HepG2 (cell line): ENCODE measurements at regions of chr16 and their contacts with region 1.

Region 1: GRCh38 chr16:4081521-4082021 is 34.7 kb downstream of the ADCY9 start:
- DNase-seq: no peak
- ATAC-seq: no peak
- H3K4me3 ChIP-seq: no peak overlapping the region
- H3K27ac ChIP-seq: no peak overlapping the region
- H3K4me1 ChIP-seq: peaks cover 9% of the 10 kb centered on the region; the same call in 1 of the 2 replicates
- H3K27me3 ChIP-seq: no peaks in the 10 kb centered on the region
- CTCF ChIP-seq: no peak
- EP300 ChIP-seq: no peak
- POLR2A ChIP-seq: no peak
- RAD21 ChIP-seq: no peak

Region 2: DNA sequence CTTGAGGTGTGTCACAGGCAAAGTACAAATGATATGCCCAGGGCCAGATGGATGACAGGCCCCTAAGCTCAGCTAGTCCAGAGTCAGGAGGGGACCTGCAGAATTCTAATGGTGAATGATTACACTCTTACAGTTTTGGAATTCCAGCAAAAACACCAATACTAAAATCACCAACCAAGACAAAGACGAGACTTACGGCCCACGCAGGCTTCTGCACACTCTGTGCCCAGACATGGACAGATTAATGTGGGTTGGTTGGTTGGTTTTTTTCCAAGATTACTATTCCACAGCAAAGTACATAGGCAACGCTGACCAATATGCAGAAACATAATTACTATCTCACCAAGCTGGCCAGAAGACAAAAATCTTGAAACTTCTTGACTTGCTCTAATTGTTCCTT is 24.9 kb after region 1 on chr16:
- CTCF ChIA-PET with region 1: no interaction called
- POLR2A ChIA-PET with region 1: no interaction called
- in situ Hi-C with region 1: no loop called
- intact Hi-C with region 1: loop called (anchors 1 kb)
- DNase-seq: no peak
- ATAC-seq: no peak
- H3K4me3 ChIP-seq: no peak overlapping the region
- H3K27ac ChIP-seq: no peak overlapping the region
- H3K4me1 ChIP-seq: peaks cover 59% of the 10 kb centered on the region
- H3K27me3 ChIP-seq: no peaks in the 10 kb centered on the region
- CTCF ChIP-seq: no peak
- EP300 ChIP-seq: no peak
- POLR2A ChIP-seq: no peak
- RAD21 ChIP-seq: no peak

Region 3: DNA sequence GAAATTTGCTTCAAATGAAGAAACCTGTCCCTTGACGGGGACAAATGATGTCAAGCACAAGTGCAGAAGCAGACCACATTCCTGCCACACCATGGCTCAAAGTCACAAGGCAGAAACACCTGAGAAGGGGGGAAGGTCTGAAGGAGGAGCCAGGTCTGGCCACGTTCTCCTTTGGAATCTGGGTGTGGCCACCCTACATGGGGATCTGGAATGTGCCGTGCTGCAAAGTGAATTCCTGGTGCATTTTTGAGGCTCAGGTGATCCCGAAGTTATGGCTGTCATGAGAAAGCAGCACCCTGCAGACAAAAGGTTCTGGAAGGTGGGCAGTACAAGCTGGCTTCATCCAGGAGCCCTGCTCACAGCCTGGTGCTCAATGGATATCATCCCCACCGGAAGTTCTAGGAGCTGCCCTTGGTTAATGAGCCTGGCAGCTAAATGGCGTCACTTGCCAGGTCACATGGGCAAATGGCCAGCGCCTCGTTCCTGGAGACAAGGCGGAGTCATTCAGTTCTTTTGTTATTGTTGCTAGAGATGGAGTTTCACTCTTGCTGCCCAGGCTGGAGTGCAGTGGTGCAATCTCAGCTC is 54.8 kb after region 1 on chr16:
- CTCF ChIA-PET with region 1: no interaction called
- POLR2A ChIA-PET with region 1: no interaction called
- in situ Hi-C with region 1: no loop called
- intact Hi-C with region 1: no loop called
- DNase-seq: no peak
- ATAC-seq: peak; percentile 54
- H3K4me3 ChIP-seq: peak overlapping the region in 1 of 3 experiments; percentile 46; a peak in 3 of 6 replicates
- H3K27ac ChIP-seq: no peak overlapping the region
- H3K4me1 ChIP-seq: peaks cover 25% of the 10 kb centered on the region
- H3K27me3 ChIP-seq: no peaks in the 10 kb centered on the region
- CTCF ChIP-seq: no peak
- EP300 ChIP-seq: no peak
- POLR2A ChIP-seq: no peak
- RAD21 ChIP-seq: no peak